Naive thymus-derived CD4-positive, alpha-beta T cell (primary cell): ENCODE measurements at regions of chr1 and their contacts with region 1.

Region 1: DNA sequence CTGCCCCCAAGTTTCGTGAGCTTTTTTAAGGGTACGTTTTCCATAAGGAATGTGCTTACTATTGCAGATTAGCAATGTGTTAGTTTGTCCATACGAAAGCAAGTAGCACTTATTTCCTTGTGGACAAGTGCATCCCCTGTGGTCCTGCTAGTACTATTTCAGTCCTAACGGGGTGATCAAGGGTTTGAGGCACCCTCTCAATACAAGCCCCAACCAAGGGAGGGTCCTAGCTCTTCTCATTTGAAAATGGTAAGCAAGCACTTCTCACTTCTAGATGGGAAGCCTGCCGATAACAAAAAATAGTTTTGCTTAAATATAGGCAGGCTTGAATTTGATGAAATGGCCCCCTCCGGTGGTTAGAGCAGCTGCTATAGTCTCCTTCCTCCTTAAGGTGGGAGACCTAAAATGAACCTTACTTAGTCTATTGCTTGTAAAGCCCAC is 64.0 kb upstream of the HMCN1 start:
- DNase-seq: peak in 8 of 9 donors; percentile 28 to 72 (median 59)
- ATAC-seq: peak; percentile 82
- H3K4me3 ChIP-seq: no peak overlapping the region
- H3K4me3 Mint-ChIP-seq: no peak overlapping the region
- H3K27ac ChIP-seq: no peak overlapping the region
- H3K27ac Mint-ChIP-seq: peak overlapping the region in 8 of 9 donors; percentile 12 to 75 (median 60)
- H3K4me1 ChIP-seq: peaks cover 4 to 20% of the 10 kb centered on the region in 2 donors
- H3K4me1 Mint-ChIP-seq: peaks cover 22 to 44% (median 33%) of the 10 kb centered on the region in 7 donors
- H3K27me3 ChIP-seq: no peaks in the 10 kb centered on the region
- H3K27me3 Mint-ChIP-seq: no peaks in the 10 kb centered on the region

Region 2: GRCh38 chr1:185044981-185045813 is 625.0 kb before region 1 on chr1 and contains the start of gene RNF2:
- CTCF ChIA-PET with region 1: no interaction called
- POLR2A ChIA-PET with region 1: no interaction called
- intact Hi-C with region 1: loop called in 1 of 2 experiments (anchors 10 kb)
- DNase-seq: peak; percentile 64 to 80 (median 77)
- ATAC-seq: peak; percentile 95
- H3K4me3 ChIP-seq: peak within 1 kb of the TSS; percentile 74
- H3K4me3 Mint-ChIP-seq: peak within 1 kb of the TSS; percentile 87 to 96 (median 92)
- H3K27ac ChIP-seq: peak within 1 kb of the TSS; percentile 75
- H3K27ac Mint-ChIP-seq: peak within 1 kb of the TSS; percentile 69 to 96 (median 88)
- H3K4me1 ChIP-seq: peaks cover 11 to 15% of the 10 kb centered on the region in 2 donors
- H3K4me1 Mint-ChIP-seq: peaks cover 27 to 56% (median 45%) of the 10 kb centered on the region in 7 donors
- H3K27me3 ChIP-seq: no peaks in the 10 kb centered on the region
- H3K27me3 Mint-ChIP-seq: peaks cover 0 to 26% (median 0%) of the 10 kb centered on the region in 5 donors
- total RNA-seq, gene RNF2: 14.9 to 27.7 (median 19.6) TPM

Region 3: DNA sequence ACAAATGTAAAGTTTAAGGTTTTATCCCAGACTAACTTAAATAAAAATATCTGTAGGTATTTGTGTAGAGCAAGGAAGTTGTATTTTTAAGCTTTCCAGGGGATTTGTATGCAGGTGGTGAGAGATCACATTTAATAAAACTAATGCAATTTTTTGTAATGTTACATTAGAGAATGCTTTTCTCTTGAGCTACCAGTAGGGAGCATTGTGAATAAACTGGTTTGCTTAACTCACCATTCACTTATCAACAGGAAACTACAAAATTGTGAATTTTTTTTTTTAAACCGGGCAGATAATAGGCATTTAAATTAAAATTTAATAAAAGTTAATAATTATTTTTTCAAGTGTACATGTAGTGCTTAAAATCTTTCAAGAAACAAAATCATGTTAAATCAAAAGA is 431.8 kb before region 1 on chr1:
- CTCF ChIA-PET with region 1: interaction called, 62 read pairs
- POLR2A ChIA-PET with region 1: interaction called, 5 read pairs
- intact Hi-C with region 1: loop called (anchors 1 kb)
- DNase-seq: peak in 6 of 9 donors; percentile 11 to 49 (median 35)
- ATAC-seq: peak; percentile 64
- H3K4me3 ChIP-seq: no peak overlapping the region
- H3K4me3 Mint-ChIP-seq: peak overlapping the region in 9 of 10 donors; percentile 3 to 73 (median 45)
- H3K27ac ChIP-seq: no peak overlapping the region
- H3K27ac Mint-ChIP-seq: peak overlapping the region in 4 of 9 donors; percentile 3 to 81 (median 13)
- H3K4me1 ChIP-seq: peaks cover 7 to 10% of the 10 kb centered on the region in 2 donors
- H3K4me1 Mint-ChIP-seq: peaks cover 5 to 33% (median 29%) of the 10 kb centered on the region in 7 donors
- H3K27me3 ChIP-seq: no peaks in the 10 kb centered on the region
- H3K27me3 Mint-ChIP-seq: no peaks in the 10 kb centered on the region

Region 4: GRCh38 chr1:185559684-185560331 is 110.4 kb before region 1 on chr1:
- CTCF ChIA-PET with region 1: interaction called, 5 read pairs
- POLR2A ChIA-PET with region 1: interaction called, 3 read pairs
- intact Hi-C with region 1: loop called in 1 of 2 experiments (anchors 5 kb)
- DNase-seq: peak in 8 of 9 donors; percentile 9 to 57 (median 18)
- ATAC-seq: peak; percentile 91
- H3K4me3 ChIP-seq: no peak overlapping the region
- H3K4me3 Mint-ChIP-seq: peak overlapping the region in 8 of 10 donors; percentile 46 to 70 (median 58)
- H3K27ac ChIP-seq: no peak overlapping the region
- H3K27ac Mint-ChIP-seq: peak overlapping the region; percentile 63 to 91 (median 81)
- H3K4me1 ChIP-seq: peaks cover 26 to 35% of the 10 kb centered on the region in 2 donors
- H3K4me1 Mint-ChIP-seq: peaks cover 36 to 53% (median 48%) of the 10 kb centered on the region in 7 donors
- H3K27me3 ChIP-seq: no peaks in the 10 kb centered on the region
- H3K27me3 Mint-ChIP-seq: no peaks in the 10 kb centered on the region

Region 5: DNA sequence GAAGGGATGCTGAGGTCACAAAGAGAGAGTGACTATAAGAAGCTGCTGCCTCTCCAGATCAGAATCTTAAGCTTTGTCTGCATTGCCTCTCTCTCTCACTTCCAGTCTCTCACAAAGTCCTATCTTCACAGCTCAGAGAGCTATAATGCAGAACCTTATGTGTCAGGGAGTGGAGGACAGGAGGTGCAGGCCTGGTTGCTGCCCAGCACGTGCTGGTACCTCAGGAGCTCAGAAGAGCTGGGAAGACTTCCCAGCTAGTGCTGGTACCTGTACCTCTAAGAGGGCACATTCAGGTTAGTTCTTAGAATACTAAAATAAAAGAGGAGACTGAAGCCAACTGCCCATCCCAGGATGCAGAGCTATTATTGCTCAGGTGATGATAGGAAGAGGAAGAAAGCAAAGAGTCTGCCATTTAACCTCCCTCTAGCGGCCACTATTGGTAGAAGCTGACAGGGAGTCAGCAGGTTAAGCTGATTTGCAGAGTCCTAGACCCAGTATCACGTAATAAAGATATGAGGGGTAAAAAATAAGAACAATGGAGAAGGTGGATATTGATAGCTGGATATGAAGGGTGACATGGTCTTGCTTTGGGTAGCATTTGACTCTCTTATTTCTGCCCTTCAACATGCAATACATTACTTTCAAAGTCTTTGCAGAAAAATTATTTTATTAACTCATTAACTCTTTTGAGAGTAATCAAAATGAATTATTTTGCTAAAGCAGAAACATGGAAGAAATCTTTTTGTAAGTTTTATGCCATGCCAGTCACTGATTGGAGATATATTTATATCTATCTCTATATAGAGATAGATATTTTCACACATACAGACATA is 74.2 kb before region 1 on chr1:
- CTCF ChIA-PET with region 1: interaction called, 12 read pairs
- POLR2A ChIA-PET with region 1: no interaction called
- intact Hi-C with region 1: loop called in 1 of 2 experiments (anchors 2 kb)
- DNase-seq: peak; percentile 16 to 61 (median 45)
- ATAC-seq: peak; percentile 80
- H3K4me3 ChIP-seq: no peak overlapping the region
- H3K4me3 Mint-ChIP-seq: no peak overlapping the region
- H3K27ac ChIP-seq: no peak overlapping the region
- H3K27ac Mint-ChIP-seq: peak overlapping the region in 5 of 9 donors; percentile 17 to 72 (median 51)
- H3K4me1 ChIP-seq: peaks cover 0 to 5% of the 10 kb centered on the region in 2 donors
- H3K4me1 Mint-ChIP-seq: peaks cover 13 to 36% (median 32%) of the 10 kb centered on the region in 7 donors
- H3K27me3 ChIP-seq: no peaks in the 10 kb centered on the region
- H3K27me3 Mint-ChIP-seq: no peaks in the 10 kb centered on the region

Region 6: GRCh38 chr1:185652348-185652747 is 17.9 kb before region 1 on chr1:
- CTCF ChIA-PET with region 1: interaction called, 15 read pairs
- POLR2A ChIA-PET with region 1: no interaction called
- intact Hi-C with region 1: loop called in 1 of 2 experiments (anchors 2 kb)
- DNase-seq: no peak
- ATAC-seq: no peak
- H3K4me3 ChIP-seq: no peak overlapping the region
- H3K4me3 Mint-ChIP-seq: no peak overlapping the region
- H3K27ac ChIP-seq: no peak overlapping the region
- H3K27ac Mint-ChIP-seq: peak overlapping the region in 2 of 9 donors; percentile 3 to 48
- H3K4me1 ChIP-seq: peaks cover 0 to 1% of the 10 kb centered on the region in 2 donors
- H3K4me1 Mint-ChIP-seq: peaks cover 7 to 21% (median 17%) of the 10 kb centered on the region in 7 donors
- H3K27me3 ChIP-seq: no peaks in the 10 kb centered on the region
- H3K27me3 Mint-ChIP-seq: no peaks in the 10 kb centered on the region

Region 7: DNA sequence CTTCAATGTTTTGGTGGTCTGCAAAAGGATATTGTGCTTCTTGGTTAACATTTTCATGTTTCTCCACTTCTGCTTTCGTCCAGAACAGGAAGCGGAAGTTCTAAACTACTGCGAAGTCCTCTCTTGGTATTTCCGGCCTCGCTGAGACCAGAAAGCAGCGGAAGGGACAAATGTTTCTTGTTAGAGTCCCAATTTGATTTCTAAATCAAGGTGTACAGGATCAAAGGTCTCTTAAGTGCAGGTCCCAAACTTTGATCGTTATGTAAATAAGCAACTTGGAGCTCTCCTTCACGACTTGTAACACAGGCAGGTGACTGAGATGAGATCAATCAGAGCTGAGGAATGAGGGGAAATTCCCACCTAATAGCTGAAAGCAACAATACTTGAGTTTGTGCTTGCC is 23.9 kb after region 1 on chr1:
- CTCF ChIA-PET with region 1: interaction called, 8 read pairs
- POLR2A ChIA-PET with region 1: interaction called, 6 read pairs
- intact Hi-C with region 1: loop called in 1 of 2 experiments (anchors 1 kb)
- DNase-seq: peak in 4 of 9 donors; percentile 20 to 26 (median 22)
- ATAC-seq: peak; percentile 60
- H3K4me3 ChIP-seq: peak overlapping the region; percentile 31
- H3K4me3 Mint-ChIP-seq: peak overlapping the region; percentile 73 to 85 (median 78)
- H3K27ac ChIP-seq: peak overlapping the region; percentile 50
- H3K27ac Mint-ChIP-seq: peak overlapping the region; percentile 77 to 96 (median 88)
- H3K4me1 ChIP-seq: peaks cover 0 to 17% of the 10 kb centered on the region in 2 donors
- H3K4me1 Mint-ChIP-seq: peaks cover 11 to 27% (median 14%) of the 10 kb centered on the region in 7 donors
- H3K27me3 ChIP-seq: no peaks in the 10 kb centered on the region
- H3K27me3 Mint-ChIP-seq: peaks cover 0 to 27% (median 9%) of the 10 kb centered on the region in 5 donors

Region 8: GRCh38 chr1:185759061-185759460 is 88.9 kb after region 1 on chr1:
- CTCF ChIA-PET with region 1: no interaction called
- POLR2A ChIA-PET with region 1: no interaction called
- intact Hi-C with region 1: no loop called
- DNase-seq: no peak
- ATAC-seq: no peak
- H3K4me3 ChIP-seq: no peak overlapping the region
- H3K4me3 Mint-ChIP-seq: no peak overlapping the region
- H3K27ac ChIP-seq: no peak overlapping the region
- H3K27ac Mint-ChIP-seq: no peak overlapping the region
- H3K4me1 ChIP-seq: no peaks in the 10 kb centered on the region
- H3K4me1 Mint-ChIP-seq: no peaks in the 10 kb centered on the region
- H3K27me3 ChIP-seq: no peaks in the 10 kb centered on the region
- H3K27me3 Mint-ChIP-seq: peaks cover 21 to 48% (median 42%) of the 10 kb centered on the region in 5 donors